ENCODE measurements at regions of chr6 and their contacts with region 1.

Region 1: GRCh38 chr6:33271458-33272274 is at the starts of genes RPS18 and VPS52:
- DNase-seq: peak; percentile 96
- ATAC-seq: peak; percentile 84
- H3K4me3 Mint-ChIP-seq: peak within 1 kb of the TSS; percentile 99
- H3K27ac Mint-ChIP-seq: peak within 1 kb of the TSS; percentile 100
- H3K4me1 Mint-ChIP-seq: peaks cover 52% of the 10 kb centered on the region
- H3K27me3 Mint-ChIP-seq: no peaks in the 10 kb centered on the region
- total RNA-seq, gene RPS18: 2,792 to 2,813 TPM
- total RNA-seq, gene VPS52: 59.3 to 59.5 TPM

Region 2: DNA sequence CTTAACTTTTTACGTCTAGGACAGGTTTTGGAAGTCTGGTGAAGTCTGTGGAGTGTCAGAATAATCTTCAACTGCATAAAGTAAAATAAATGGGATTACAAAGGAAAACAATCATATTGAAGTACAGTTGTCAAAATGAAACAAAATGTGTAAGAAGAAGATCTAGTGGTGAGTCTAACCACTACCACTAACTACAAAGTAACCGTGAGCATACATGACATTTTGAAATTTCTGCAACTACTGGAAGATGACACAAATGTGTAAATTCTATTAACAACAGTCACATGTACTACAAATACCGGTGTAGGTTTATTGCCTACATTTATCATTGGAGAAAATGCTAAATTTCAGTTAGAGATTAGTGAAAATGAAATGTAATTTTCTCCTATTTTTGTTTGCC is 29.7 kb before region 1 on chr6:
- CTCF ChIA-PET with region 1: no interaction called
- POLR2A ChIA-PET with region 1: no interaction called
- DNase-seq: no peak
- ATAC-seq: peak; percentile 73
- H3K4me3 Mint-ChIP-seq: peak overlapping the region; percentile 41
- H3K27ac Mint-ChIP-seq: no peak overlapping the region
- H3K4me1 Mint-ChIP-seq: peaks cover 12% of the 10 kb centered on the region
- H3K27me3 Mint-ChIP-seq: peaks cover 7% of the 10 kb centered on the region

Region 3: DNA sequence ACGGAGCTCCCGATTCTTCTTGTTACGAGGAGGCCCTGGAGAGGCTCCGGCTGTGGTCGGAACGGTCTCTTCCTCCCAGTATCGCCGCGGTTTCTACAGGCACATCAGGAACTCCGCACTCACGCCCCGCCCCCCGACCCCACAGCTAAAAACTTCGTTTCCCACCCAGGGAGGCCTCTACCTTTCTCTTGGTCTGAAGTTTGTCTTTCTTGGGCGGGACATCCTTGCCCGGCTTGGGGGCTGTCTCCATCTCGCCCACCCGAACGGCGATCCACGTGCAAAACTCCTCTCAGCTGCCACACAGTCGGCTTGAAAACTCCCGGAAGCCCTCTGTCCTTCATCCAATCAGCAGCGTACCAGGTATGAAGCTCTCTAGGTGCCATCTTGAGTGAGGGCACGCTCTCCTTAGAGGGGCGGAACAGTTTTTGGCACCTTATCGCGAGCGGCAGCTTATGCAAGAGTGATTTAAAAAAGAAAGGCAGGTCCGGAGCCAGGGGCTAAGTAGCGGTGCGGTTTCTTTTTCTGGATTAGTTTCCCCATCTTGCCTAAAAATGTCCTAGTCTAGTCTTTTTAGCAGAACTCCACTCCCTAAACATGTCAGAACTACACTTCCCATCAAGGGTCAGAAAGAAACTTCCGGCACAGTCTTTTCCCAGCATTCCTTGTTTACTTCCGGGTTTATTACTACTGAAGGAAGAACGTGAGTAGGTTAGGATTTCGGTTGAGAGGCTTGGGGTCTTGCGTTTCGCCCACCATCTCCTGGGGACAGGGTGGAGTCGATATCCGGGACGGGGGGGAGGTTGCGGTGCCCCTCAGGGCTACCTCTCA is 17.5 kb after region 1 on chr6 and contains the starts of genes PFDN6 and WDR46:
- CTCF ChIA-PET with region 1: interaction called, 28 read pairs
- POLR2A ChIA-PET with region 1: interaction called, 50 read pairs
- DNase-seq: peak; percentile 93
- ATAC-seq: peak; percentile 97
- H3K4me3 Mint-ChIP-seq: peak within 1 kb of the TSS; percentile 97
- H3K27ac Mint-ChIP-seq: peak within 1 kb of the TSS; percentile 87
- H3K4me1 Mint-ChIP-seq: peaks cover 46% of the 10 kb centered on the region
- H3K27me3 Mint-ChIP-seq: no peaks in the 10 kb centered on the region
- total RNA-seq, gene PFDN6: 72.0 to 78.4 TPM
- total RNA-seq, gene WDR46: 66.7 to 68.9 TPM

Region 4: GRCh38 chr6:33344701-33345697 is 73.3 kb after region 1 on chr6:
- CTCF ChIA-PET with region 1: interaction called, 4 read pairs
- POLR2A ChIA-PET with region 1: interaction called, 15 read pairs
- DNase-seq: peak; percentile 85
- ATAC-seq: peak; percentile 68
- H3K4me3 Mint-ChIP-seq: peak overlapping the region; percentile 69
- H3K27ac Mint-ChIP-seq: peak overlapping the region; percentile 94
- H3K4me1 Mint-ChIP-seq: peaks cover 40% of the 10 kb centered on the region
- H3K27me3 Mint-ChIP-seq: no peaks in the 10 kb centered on the region

Measured in activated CD8-positive, alpha-beta T cell treated with anti-CD3 and anti-CD28 coated beads, Interleukin-2, amount 10 ng/mL, durations not matched to agents 7 days and 5 days (primary cell).